Activated CD4-positive, alpha-beta T cell treated with anti-CD3 and anti-CD28 coated beads for 36 hours (primary cell): ENCODE measurements at regions of chr16 and their contacts with region 1.

Region 1: GRCh38 chr16:30692381-30693064 is 6.4 kb upstream of the SRCAP start:
- DNase-seq: no peak
- ATAC-seq: no peak
- H3K4me3 Mint-ChIP-seq: no peak overlapping the region
- H3K27ac Mint-ChIP-seq: no peak overlapping the region
- H3K4me1 Mint-ChIP-seq: peaks cover 15% of the 10 kb centered on the region
- H3K27me3 Mint-ChIP-seq: no peaks in the 10 kb centered on the region

Region 2: GRCh38 chr16:30491744-30492308 is 200.7 kb before region 1 on chr16:
- CTCF ChIA-PET with region 1: no interaction called
- POLR2A ChIA-PET with region 1: no interaction called
- intact Hi-C with region 1: no loop called
- DNase-seq: peak; percentile 24
- ATAC-seq: peak; percentile 65
- H3K4me3 Mint-ChIP-seq: no peak overlapping the region
- H3K27ac Mint-ChIP-seq: peak overlapping the region; percentile 66
- H3K4me1 Mint-ChIP-seq: peaks cover 25% of the 10 kb centered on the region
- H3K27me3 Mint-ChIP-seq: no peaks in the 10 kb centered on the region

Region 3: DNA sequence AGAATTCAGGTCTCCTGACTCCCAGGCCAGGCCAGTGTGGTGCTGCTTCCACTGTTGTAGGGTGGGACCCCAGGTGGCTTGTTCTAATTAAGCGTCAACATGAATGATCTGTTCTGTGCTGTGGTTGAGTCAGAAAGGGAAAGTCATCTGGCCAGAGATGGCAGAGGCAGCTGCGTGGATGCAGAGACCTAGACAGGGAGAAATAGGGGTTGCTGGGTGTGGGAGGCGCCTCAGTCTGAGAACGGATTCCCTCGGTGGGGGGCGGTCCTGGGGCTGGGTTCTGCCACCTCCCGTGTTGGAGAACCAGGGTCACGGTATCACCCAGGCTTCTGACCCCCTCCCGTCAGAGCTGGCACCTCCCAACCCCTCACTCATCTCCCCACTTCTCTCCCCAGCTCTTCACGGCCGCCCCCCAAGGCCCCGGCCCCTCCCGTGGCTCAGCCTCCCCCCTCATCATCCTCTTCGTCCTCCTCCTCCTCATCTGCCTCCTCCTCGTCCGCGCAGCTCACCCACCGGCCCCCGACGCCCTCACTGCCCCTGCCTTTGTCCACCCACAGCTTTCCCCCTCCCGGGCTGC is 28.6 kb before region 1 on chr16:
- CTCF ChIA-PET with region 1: interaction called, 35 read pairs
- POLR2A ChIA-PET with region 1: interaction called, 10 read pairs
- intact Hi-C with region 1: loop called (anchors 1 kb)
- DNase-seq: no peak
- ATAC-seq: no peak
- H3K4me3 Mint-ChIP-seq: no peak overlapping the region
- H3K27ac Mint-ChIP-seq: peak overlapping the region; percentile 35
- H3K4me1 Mint-ChIP-seq: peaks cover 32% of the 10 kb centered on the region
- H3K27me3 Mint-ChIP-seq: no peaks in the 10 kb centered on the region